WTC11 (cell line): ENCODE measurements at regions of chr15 and their contacts with region 1.

Region 1: DNA sequence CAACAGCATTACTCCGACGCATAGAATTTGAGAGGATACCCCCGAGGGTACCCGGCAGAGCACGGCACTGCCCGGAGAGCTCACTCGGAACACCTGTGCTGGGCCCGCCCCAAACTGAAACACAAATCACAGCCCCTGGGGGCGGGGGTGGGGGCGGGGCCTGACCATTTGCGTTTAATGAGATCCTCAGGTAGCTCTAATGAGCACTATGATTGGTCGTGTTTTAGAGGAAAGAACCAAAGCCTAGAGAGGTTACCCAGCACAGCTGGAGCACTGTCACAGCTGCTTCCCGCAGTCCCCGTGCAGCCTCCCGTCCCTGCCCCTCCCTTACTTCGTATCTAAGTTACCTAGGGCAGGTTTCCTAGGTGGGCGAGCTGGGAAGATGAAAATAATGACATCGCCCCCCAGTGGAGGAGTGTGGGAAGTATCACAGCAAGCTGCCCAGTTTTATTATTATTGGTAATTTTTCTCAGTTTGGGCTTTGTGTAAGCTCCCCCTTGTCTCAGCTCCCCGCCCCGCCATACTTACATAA is 187.1 kb downstream of the PDE8A start:
- DNase-seq: peak; percentile 83
- ATAC-seq: peak; percentile 98
- H3K4me3 Mint-ChIP-seq: peak overlapping the region; percentile 64
- H3K27ac Mint-ChIP-seq: no peak overlapping the region
- H3K4me1 Mint-ChIP-seq: peaks cover 12% of the 10 kb centered on the region
- H3K27me3 Mint-ChIP-seq: peaks cover 7% of the 10 kb centered on the region; the same call in 1 of the 2 replicates
- CTCF ChIP-seq: peak; percentile 69

Region 2: GRCh38 chr15:84955089-84955848 is 213.4 kb before region 1 on chr15:
- CTCF ChIA-PET with region 1: interaction called, 11 read pairs
- POLR2A ChIA-PET with region 1: no interaction called
- DNase-seq: peak; percentile 70
- ATAC-seq: peak; percentile 96
- H3K4me3 Mint-ChIP-seq: no peak overlapping the region
- H3K27ac Mint-ChIP-seq: no peak overlapping the region
- H3K4me1 Mint-ChIP-seq: peaks cover 22% of the 10 kb centered on the region
- H3K27me3 Mint-ChIP-seq: no peaks in the 10 kb centered on the region
- CTCF ChIP-seq: no peak

Region 3: DNA sequence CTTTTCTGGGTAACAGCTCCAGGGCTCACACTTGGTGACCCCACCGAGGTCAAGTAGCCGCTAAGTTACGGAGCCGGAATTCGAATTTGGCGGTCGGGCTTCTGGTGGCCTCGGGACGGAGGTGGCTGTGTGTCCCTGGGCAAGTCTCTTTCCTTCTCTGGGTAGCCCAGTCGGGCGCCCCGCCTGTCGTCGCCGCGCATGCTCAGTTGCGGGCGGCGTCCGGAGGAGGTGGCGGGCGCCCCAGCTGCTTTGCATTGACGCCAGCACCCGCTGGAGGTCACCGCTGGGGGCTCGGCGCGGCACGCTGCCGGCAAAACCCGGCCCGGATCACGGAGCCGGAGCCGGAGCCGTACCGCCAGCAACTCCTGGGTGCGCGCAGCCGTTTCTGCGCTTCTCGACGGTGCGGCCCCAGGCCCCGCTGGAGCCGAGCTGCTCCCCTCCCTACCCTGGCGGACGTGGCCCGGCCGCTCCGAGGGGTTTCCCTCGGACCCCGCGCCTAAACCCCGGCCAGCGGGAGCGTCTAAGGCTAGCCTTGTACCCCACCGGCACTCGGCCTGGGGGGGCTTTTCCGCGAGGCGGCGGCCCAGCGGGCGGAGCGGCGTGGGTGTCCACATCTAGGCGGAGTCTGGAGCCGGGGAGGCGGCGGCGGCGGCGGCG is 187.5 kb before region 1 on chr15:
- CTCF ChIA-PET with region 1: interaction called, 10 read pairs
- POLR2A ChIA-PET with region 1: no interaction called
- DNase-seq: peak; percentile 94
- ATAC-seq: peak; percentile 69
- H3K4me3 Mint-ChIP-seq: peak overlapping the region; percentile 89
- H3K27ac Mint-ChIP-seq: no peak overlapping the region; the same call in 1 of the 2 replicates
- H3K4me1 Mint-ChIP-seq: peaks cover 29% of the 10 kb centered on the region
- H3K27me3 Mint-ChIP-seq: peaks cover 54% of the 10 kb centered on the region
- CTCF ChIP-seq: no peak

Region 4: GRCh38 chr15:85044251-85044853 is 124.4 kb before region 1 on chr15:
- CTCF ChIA-PET with region 1: interaction called, 15 read pairs
- POLR2A ChIA-PET with region 1: no interaction called
- DNase-seq: peak; percentile 64
- ATAC-seq: peak; percentile 94
- H3K4me3 Mint-ChIP-seq: no peak overlapping the region
- H3K27ac Mint-ChIP-seq: no peak overlapping the region
- H3K4me1 Mint-ChIP-seq: peaks cover 14% of the 10 kb centered on the region; the same call in 1 of the 2 replicates
- H3K27me3 Mint-ChIP-seq: no peaks in the 10 kb centered on the region
- CTCF ChIP-seq: no peak

Region 5: DNA sequence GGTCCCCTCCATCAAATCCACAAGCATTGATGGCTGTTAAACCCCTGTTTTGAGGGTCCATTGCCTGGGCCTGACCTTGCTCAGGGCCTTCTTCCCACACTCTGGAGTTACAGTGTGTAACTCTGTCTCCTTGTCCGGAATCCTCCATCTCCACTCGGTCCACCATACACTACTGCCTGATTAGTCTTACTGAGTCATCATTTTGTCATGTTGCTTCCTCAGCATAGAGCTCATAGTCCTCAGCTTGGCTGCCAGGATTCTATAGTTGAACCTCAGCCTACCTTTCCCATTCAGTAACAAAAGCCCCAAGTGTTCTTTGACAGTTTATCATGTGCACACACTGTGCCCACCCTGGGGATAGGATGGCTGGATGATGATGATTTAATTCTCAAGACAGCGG is 74.0 kb before region 1 on chr15:
- CTCF ChIA-PET with region 1: no interaction called
- POLR2A ChIA-PET with region 1: no interaction called
- DNase-seq: no peak
- ATAC-seq: no peak
- H3K4me3 Mint-ChIP-seq: no peak overlapping the region
- H3K27ac Mint-ChIP-seq: no peak overlapping the region
- H3K4me1 Mint-ChIP-seq: peaks cover 4% of the 10 kb centered on the region; the same call in 1 of the 2 replicates
- H3K27me3 Mint-ChIP-seq: no peaks in the 10 kb centered on the region
- CTCF ChIP-seq: no peak

Region 6: DNA sequence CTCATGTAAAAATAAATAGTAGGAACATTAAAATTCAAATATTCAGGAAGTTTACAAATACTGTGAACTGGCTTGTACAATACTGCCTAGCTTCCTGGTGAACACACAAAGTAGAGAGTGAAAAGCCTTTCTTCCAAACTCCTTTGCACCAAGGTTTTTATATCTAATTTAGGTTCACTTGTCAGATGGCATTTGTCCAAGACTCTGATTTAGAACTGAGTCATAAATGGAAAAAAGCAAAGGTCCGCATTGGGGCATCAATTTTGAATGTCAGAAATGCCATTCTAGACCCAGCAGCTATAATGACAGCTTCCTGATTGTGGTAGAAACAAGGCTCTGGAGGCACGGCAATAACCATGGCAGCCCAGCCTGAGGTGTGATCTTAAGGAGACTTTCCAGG is 26.4 kb before region 1 on chr15:
- CTCF ChIA-PET with region 1: interaction called, 14 read pairs
- POLR2A ChIA-PET with region 1: no interaction called
- DNase-seq: no peak
- ATAC-seq: no peak
- H3K4me3 Mint-ChIP-seq: no peak overlapping the region
- H3K27ac Mint-ChIP-seq: no peak overlapping the region
- H3K4me1 Mint-ChIP-seq: peaks cover 10% of the 10 kb centered on the region
- H3K27me3 Mint-ChIP-seq: no peaks in the 10 kb centered on the region
- CTCF ChIP-seq: no peak

Region 7: DNA sequence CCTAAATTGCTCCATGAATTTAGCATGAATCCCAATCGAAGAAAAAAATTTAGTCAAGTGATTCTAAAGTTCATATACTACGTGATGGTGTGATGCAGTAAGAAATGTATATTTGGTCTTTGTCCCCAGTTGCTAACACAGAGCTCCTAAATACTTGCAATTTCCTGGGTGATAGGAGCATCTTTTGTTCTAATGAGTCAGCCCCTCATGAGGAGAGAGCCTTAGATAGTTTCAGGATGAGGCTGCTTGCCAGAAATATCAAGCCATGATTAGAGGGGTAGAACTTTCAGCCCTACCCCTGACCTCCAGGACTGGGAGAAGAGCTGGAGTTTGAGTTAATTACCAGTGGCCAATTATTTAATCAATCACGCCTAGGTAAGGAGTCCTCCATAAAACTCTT is 16.8 kb before region 1 on chr15:
- CTCF ChIA-PET with region 1: interaction called, 24 read pairs
- POLR2A ChIA-PET with region 1: no interaction called
- DNase-seq: no peak
- ATAC-seq: no peak
- H3K4me3 Mint-ChIP-seq: no peak overlapping the region
- H3K27ac Mint-ChIP-seq: no peak overlapping the region
- H3K4me1 Mint-ChIP-seq: peaks cover 28% of the 10 kb centered on the region
- H3K27me3 Mint-ChIP-seq: no peaks in the 10 kb centered on the region
- CTCF ChIP-seq: no peak